ENCODE measurements at regions of chr16 and their contacts with region 1.

Region 1: GRCh38 chr16:56519459-56520250 is at the start of gene BBS2:
- DNase-seq: peak; percentile 94
- ATAC-seq: peak; percentile 98
- total RNA-seq, gene BBS2: 110 TPM

Region 2: DNA sequence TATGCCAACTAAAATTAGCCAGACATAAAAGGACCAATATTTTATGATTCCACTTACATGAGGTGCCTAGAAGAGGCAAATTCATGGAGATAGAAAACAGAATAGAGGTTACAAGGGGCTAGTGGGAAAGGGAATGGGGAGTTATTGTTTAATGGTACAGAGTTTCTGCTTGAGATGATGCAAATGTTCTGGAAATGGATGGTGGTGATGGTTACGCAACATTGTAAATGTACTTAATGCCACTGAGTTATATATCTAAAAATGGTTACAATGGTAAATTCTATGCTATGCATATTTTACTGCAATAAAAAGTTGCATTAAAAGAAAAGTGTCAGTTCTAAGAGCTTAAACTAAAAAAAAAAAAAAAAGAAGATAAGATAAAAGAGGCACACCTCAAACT is 180.5 kb after region 1 on chr16:
- intact Hi-C with region 1: loop called (anchors 5 kb)
- DNase-seq: no peak
- ATAC-seq: no peak

Region 3: GRCh38 chr16:57300387-57301125 is 780.9 kb after region 1 on chr16:
- intact Hi-C with region 1: no loop called
- DNase-seq: peak; percentile 99
- ATAC-seq: peak; percentile 95

Measured in sciatic nerve (tissue), 2 donors.